Dendritic cell treated with granulocyte-macrophage colony-stimulating factor and Interleukin-4, amounts not matched to agents 40 ng/mL and 50 ng/mL, for 4 days (primary cell): ENCODE measurements at regions of chr4 and their contacts with region 1.

Region 1: GRCh38 chr4:158786121-158786601 is 17.3 kb downstream of the FNIP2 start:
- H3K4me3 Mint-ChIP-seq: no peak overlapping the region
- H3K27ac Mint-ChIP-seq: peak overlapping the region; percentile 88
- H3K4me1 Mint-ChIP-seq: peaks cover 83% of the 10 kb centered on the region
- H3K27me3 Mint-ChIP-seq: no peaks in the 10 kb centered on the region

Region 2: GRCh38 chr4:158771776-158772175 is 14.4 kb before region 1 on chr4:
- intact Hi-C with region 1: loop called (anchors 2 kb)
- H3K4me3 Mint-ChIP-seq: peak overlapping the region; percentile 100
- H3K27ac Mint-ChIP-seq: peak overlapping the region; percentile 62
- H3K4me1 Mint-ChIP-seq: peaks cover 57% of the 10 kb centered on the region
- H3K27me3 Mint-ChIP-seq: no peaks in the 10 kb centered on the region

Region 3: GRCh38 chr4:158805619-158806471 is 19.7 kb after region 1 on chr4:
- intact Hi-C with region 1: no loop called
- H3K4me3 Mint-ChIP-seq: peak overlapping the region; percentile 80
- H3K27ac Mint-ChIP-seq: peak overlapping the region; percentile 97
- H3K4me1 Mint-ChIP-seq: peaks cover 68% of the 10 kb centered on the region
- H3K27me3 Mint-ChIP-seq: no peaks in the 10 kb centered on the region